ENCODE measurements at regions of chr11 and their contacts with region 1.

Region 1: DNA sequence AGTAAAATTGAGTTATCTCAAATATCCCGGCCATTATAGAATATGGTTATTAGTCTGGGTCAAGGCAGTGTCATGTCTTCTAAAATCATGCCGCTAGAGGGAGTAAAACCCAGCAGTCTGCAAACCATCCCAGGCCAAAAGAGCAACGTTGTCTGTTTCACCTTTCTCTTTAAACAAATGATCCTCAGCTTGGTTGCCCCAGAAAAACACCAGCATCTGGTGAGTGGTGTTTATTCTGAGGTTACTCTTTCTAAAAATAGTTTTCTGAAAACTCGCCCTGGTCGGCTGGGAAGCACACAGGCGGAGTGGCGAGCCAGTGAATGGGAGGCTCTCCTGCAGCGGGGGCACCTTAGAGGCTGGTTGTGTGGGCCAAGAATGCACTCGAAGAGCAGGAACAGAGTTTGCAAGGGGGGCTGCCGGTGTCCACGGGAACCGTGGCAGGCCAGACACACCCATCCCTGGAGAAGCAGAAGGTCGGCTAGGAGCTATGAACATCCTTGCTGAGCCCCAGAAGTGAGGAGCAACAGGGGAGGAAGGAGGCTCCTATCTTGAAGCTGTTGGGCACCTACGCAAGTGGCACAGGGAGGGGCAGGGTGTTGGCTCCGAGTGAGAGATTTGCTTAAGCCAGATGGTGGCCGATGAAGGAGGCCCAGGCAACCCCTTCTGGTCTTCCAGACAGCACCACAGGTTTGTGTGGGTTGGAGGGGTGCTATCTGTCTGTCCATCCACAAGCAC is 297.1 kb downstream of the ETS1 start:
- DNase-seq: peak; percentile 67
- ATAC-seq: peak; percentile 75
- H3K4me3 Mint-ChIP-seq: peak overlapping the region; percentile 85
- H3K27ac Mint-ChIP-seq: peak overlapping the region; percentile 99
- H3K4me1 Mint-ChIP-seq: peaks cover 97% of the 10 kb centered on the region
- H3K27me3 Mint-ChIP-seq: no peaks in the 10 kb centered on the region
- CTCF ChIP-seq: no peak

Region 2: DNA sequence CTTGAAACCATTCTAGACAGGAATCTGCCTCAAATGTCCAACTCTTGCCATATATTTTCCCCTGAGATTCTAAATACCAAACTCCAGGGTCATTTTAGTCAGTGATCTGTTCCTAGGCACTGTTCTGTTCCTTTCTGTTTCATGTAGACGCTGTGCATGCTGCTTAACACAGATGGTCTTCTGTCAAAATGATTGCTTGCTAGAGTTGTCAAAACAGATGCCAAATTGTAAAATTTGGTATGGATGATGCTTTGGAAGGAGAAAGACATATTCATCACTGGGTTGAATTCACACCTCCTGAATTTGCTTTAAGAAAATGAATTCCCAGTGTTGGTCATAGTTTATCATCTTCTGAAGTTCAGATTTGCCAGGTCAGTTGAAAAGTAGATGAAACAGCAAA is 128.8 kb before region 1 on chr11:
- CTCF ChIA-PET with region 1: no interaction called
- POLR2A ChIA-PET with region 1: no interaction called
- intact Hi-C with region 1: no loop called
- DNase-seq: no peak
- ATAC-seq: no peak
- H3K4me3 Mint-ChIP-seq: no peak overlapping the region
- H3K27ac Mint-ChIP-seq: no peak overlapping the region
- H3K4me1 Mint-ChIP-seq: peaks cover 6% of the 10 kb centered on the region
- H3K27me3 Mint-ChIP-seq: peaks cover 12% of the 10 kb centered on the region
- CTCF ChIP-seq: no peak

Region 3: DNA sequence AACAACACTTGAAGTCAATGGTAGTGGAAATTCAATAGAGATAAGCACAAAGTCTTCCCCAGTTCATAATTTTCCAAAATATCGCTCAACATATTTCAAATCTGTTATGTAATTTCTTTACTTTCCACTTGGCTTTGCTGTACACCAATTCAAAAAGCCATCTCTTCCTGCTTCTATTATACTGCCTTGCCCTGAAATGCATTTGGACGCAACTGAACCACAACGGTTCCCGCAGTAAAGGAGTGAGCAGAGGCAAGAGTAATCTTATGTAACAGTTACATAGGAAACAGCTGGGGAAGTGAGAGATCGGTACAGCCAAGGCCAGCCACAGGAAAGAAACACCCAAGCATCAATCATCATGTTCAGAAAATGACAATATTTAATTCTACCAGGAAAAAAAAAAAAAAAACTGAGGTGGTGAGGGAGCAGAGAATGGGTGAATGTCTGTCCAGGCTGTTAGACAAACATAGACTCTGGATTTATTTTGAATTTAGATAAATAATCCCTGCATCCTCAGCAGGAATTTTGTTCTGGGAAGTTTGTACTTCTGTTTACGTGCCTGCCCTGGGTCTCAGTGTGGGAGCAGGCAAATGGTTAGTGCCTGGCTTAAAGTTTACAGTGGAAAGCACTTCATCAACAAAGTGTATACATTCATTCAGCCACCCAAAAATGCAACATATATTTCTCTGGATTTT is 95.1 kb before region 1 on chr11:
- CTCF ChIA-PET with region 1: interaction called, 3 read pairs
- POLR2A ChIA-PET with region 1: no interaction called
- intact Hi-C with region 1: loop called (anchors 1 kb)
- DNase-seq: no peak
- ATAC-seq: peak; percentile 84
- H3K4me3 Mint-ChIP-seq: peak overlapping the region; percentile 16
- H3K27ac Mint-ChIP-seq: peak overlapping the region; percentile 22
- H3K4me1 Mint-ChIP-seq: peaks cover 18% of the 10 kb centered on the region
- H3K27me3 Mint-ChIP-seq: no peaks in the 10 kb centered on the region
- CTCF ChIP-seq: no peak

Region 4: DNA sequence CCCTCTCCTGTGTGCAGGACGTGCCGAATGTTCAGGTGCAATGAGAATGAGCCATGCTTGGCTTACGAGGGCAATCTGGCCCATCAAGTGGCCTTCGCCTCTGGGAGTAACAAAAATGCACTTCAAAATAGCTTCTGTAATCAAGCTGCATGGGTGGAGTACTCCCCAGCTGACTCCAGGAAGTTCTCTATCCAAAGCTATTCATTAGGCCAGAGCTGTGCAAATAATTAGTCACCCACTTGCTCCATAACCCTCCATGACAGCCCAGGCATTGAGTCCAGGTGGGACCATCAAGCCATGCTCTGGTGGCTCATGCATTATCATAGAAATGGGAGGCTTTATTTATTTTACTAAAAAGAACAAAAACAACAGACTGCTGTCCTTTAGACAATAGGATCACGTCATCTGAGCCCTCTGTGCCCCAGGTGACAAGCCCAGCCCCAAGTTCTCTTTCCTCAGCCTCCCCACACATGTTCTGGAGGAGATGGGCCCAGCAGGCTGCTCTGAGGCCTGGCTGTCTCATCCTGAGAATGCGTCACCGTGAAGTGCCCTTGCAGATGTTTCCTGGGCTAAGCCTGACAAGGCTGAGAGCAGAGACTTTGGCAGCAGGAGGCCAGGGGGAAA is 52.4 kb after region 1 on chr11:
- CTCF ChIA-PET with region 1: interaction called, 3 read pairs
- POLR2A ChIA-PET with region 1: interaction called, 3 read pairs
- intact Hi-C with region 1: loop called (anchors 2 kb)
- DNase-seq: no peak
- ATAC-seq: peak; percentile 87
- H3K4me3 Mint-ChIP-seq: no peak overlapping the region
- H3K27ac Mint-ChIP-seq: peak overlapping the region; percentile 76
- H3K4me1 Mint-ChIP-seq: peaks cover 37% of the 10 kb centered on the region
- H3K27me3 Mint-ChIP-seq: no peaks in the 10 kb centered on the region
- CTCF ChIP-seq: no peak

Region 5: GRCh38 chr11:128482512-128483191 is 192.4 kb after region 1 on chr11:
- CTCF ChIA-PET with region 1: interaction called, 7 read pairs
- POLR2A ChIA-PET with region 1: interaction called, 31 read pairs
- intact Hi-C with region 1: loop called (anchors 1 kb)
- DNase-seq: no peak
- ATAC-seq: peak; percentile 18
- H3K4me3 Mint-ChIP-seq: peak overlapping the region; percentile 67
- H3K27ac Mint-ChIP-seq: peak overlapping the region; percentile 89
- H3K4me1 Mint-ChIP-seq: peaks cover 95% of the 10 kb centered on the region
- H3K27me3 Mint-ChIP-seq: no peaks in the 10 kb centered on the region
- CTCF ChIP-seq: no peak

Region 6: DNA sequence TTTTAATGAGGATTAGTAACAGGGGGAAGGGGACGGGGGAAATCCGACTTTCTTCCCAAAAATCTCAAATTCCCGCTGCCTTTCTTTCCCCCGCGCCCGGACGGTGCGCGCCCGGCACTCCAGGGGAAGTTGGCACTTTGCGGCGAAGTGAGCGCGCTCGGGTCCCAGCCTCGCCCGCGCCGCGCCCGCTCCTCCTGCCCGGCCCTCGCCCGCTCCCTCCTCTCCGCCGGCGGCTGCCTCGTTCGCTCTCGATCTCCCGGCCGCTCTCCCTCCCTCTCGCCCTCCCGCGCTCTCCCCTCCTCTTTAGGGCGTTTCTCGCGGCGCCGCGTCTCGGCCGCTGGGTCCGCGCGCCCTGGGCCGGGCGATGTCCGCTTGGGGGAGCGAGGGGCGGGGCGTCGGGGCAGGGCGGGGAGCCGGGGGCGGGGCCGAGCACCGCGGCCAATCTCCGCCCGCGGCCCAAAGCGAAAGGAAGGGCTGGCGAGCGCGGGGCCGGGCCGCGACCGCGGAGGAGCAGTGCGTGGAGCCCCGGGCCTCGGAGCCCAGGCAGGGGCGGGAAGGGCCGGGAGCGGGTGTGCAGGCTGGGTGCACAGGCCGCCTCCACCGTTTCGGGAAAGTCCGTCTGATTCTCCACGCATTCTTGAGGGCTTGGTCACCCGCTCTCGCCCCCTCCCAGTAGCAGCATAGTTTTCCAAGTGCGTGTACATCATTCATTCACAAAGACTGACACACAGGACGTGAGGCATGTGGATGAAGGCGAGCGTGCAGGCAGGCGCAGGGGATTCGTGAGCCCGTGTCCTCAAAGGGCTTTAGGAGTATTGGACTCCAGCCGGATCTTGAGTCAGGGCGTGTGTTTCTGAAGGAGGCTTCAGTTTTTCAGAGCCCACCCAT is 232.0 kb after region 1 on chr11:
- CTCF ChIA-PET with region 1: interaction called, 22 read pairs
- POLR2A ChIA-PET with region 1: interaction called, 90 read pairs
- intact Hi-C with region 1: loop called (anchors 1 kb)
- DNase-seq: peak; percentile 88
- ATAC-seq: peak; percentile 89
- H3K4me3 Mint-ChIP-seq: peak overlapping the region; percentile 99
- H3K27ac Mint-ChIP-seq: peak overlapping the region; percentile 97
- H3K4me1 Mint-ChIP-seq: peaks cover 56% of the 10 kb centered on the region
- H3K27me3 Mint-ChIP-seq: no peaks in the 10 kb centered on the region
- CTCF ChIP-seq: no peak

Region 7: DNA sequence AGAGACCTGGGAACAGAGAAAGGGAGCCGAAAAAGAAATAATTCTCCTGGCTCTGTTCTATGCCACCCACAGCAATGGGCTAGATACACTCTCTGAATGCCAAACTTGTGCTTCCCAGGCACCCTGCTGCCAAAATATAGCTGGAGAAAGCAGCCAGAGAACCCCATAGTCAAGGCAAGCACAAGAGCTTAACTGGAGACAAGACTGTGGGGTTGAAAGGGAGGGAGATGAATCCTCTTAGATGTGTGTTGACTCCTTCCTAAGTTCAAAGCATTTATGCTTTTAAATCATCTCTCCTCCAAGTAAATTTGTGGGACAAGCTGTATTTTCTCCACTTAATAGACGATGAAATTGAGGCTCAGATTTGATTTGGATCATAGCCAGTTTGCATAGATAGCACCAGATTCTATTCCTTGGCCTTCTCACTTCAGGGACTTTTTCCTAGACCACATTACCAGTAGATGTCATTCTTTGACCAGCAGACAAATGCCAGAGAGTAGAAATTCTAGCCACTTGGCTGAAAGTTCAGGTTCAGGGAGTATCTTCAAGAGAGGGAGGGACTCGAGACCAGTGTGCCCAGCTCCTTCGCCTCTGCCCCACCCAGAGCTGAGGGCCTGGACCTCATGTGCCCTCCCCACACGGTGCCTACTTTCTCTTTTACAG is 313.6 kb after region 1 on chr11:
- CTCF ChIA-PET with region 1: interaction called, 18 read pairs
- POLR2A ChIA-PET with region 1: interaction called, 4 read pairs
- intact Hi-C with region 1: loop called (anchors 1 kb)
- DNase-seq: no peak
- ATAC-seq: peak; percentile 63
- H3K4me3 Mint-ChIP-seq: no peak overlapping the region
- H3K27ac Mint-ChIP-seq: peak overlapping the region; percentile 78
- H3K4me1 Mint-ChIP-seq: peaks cover 70% of the 10 kb centered on the region
- H3K27me3 Mint-ChIP-seq: no peaks in the 10 kb centered on the region
- CTCF ChIP-seq: no peak

Region 8: DNA sequence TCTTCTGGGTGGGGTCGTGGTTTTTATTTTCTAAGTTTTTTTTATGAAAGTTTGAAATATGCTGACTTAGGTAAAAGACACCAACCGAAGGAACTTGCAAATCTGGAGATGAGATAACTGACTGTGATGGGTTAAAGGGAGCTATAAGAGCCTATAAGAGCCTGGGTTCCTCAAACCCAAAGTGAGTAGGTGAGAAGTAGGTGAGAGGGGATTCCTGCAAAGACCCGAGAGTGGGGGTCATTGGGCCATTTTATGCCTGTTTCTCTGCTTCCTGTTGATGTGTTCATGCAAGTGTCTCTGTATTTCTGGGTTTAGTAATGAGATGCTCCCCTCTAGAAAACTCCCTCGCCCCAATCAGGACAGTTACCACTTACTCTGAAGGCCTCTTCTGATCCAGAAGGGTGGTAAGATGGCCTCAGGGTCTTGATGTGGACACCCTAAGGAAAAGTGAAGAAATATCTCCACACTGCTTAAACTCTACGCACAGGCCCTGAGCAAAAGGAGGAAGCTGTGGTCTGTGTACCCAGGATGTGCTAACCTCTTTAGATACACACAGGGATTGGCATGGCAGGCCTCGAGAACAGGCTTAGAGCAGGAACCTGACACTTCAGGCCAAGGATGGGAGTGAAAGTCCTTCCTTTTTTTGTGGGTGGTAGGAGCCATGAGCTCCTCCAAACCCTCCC is 405.4 kb after region 1 on chr11:
- CTCF ChIA-PET with region 1: interaction called, 3 read pairs
- POLR2A ChIA-PET with region 1: interaction called, 9 read pairs
- intact Hi-C with region 1: loop called (anchors 2 kb)
- DNase-seq: no peak
- ATAC-seq: peak; percentile 52
- H3K4me3 Mint-ChIP-seq: peak overlapping the region; percentile 96
- H3K27ac Mint-ChIP-seq: peak overlapping the region; percentile 97
- H3K4me1 Mint-ChIP-seq: peaks cover 72% of the 10 kb centered on the region
- H3K27me3 Mint-ChIP-seq: peaks cover 1% of the 10 kb centered on the region
- CTCF ChIP-seq: no peak